ENCODE measurements at regions of chrX and their contacts with region 1.

Region 1: DNA sequence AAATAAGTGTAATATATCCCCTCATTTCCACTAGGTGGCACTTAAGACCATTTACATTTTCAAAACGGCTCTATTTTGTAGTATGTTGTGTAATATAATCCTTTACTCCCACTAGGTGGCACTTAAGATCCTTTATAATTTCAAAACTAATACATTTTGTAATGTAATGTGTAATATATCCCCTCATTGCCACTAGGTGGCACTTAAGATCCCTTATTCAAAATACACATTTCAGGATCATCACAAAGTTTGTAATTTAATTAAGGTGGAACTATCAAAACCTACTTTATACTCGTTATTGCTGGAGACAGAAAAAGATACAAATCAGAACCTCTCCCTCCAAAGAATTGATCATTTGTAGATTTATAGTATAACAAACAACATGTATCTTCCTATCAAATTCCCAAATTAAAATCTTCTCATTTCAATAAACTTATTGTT is 132.5 kb downstream of the ARHGAP6 start:
- DNase-seq: peak; percentile 56 to 76 (median 62)
- ATAC-seq: peak; percentile 81
- H3K4me3 ChIP-seq: no peak overlapping the region
- H3K27ac ChIP-seq: no peak overlapping the region
- H3K4me1 ChIP-seq: peaks cover 0 to 18% of the 10 kb centered on the region in 2 experiments; a peak in 2 of 5 replicates
- H3K27me3 ChIP-seq: no peaks in the 10 kb centered on the region
- CTCF ChIP-seq: peak; percentile 58 to 100 (median 98)
- EP300 ChIP-seq: no peak
- POLR2A ChIP-seq: no peak
- RAD21 ChIP-seq: peak; percentile 98

Region 2: GRCh38 chrX:11125060-11125459 is 408.2 kb before region 1 on chrX:
- CTCF ChIA-PET with region 1: no interaction called
- POLR2A ChIA-PET with region 1: no interaction called
- in situ Hi-C with region 1: no loop called
- intact Hi-C with region 1: no loop called
- DNase-seq: no peak
- ATAC-seq: no peak
- H3K4me3 ChIP-seq: no peak overlapping the region
- H3K27ac ChIP-seq: no peak overlapping the region
- H3K4me1 ChIP-seq: no peaks in the 10 kb centered on the region
- H3K27me3 ChIP-seq: no peaks in the 10 kb centered on the region
- CTCF ChIP-seq: no peak
- EP300 ChIP-seq: no peak
- POLR2A ChIP-seq: no peak
- RAD21 ChIP-seq: no peak

Region 3: GRCh38 chrX:11143931-11144678 is 389.1 kb before region 1 on chrX:
- CTCF ChIA-PET with region 1: interaction called, 91 read pairs
- POLR2A ChIA-PET with region 1: interaction called, 3 read pairs
- in situ Hi-C with region 1: loop called (anchors 5 kb)
- intact Hi-C with region 1: loop called (anchors 1 kb)
- DNase-seq: peak; percentile 39 to 81 (median 53)
- ATAC-seq: peak; percentile 93
- H3K4me3 ChIP-seq: no peak overlapping the region
- H3K27ac ChIP-seq: no peak overlapping the region
- H3K4me1 ChIP-seq: no peaks in the 10 kb centered on the region; a peak in 2 of 5 replicates
- H3K27me3 ChIP-seq: no peaks in the 10 kb centered on the region
- CTCF ChIP-seq: peak; percentile 48 to 74 (median 65); a peak in 5 of 6 replicates
- EP300 ChIP-seq: no peak
- POLR2A ChIP-seq: no peak
- RAD21 ChIP-seq: peak; percentile 71 to 78

Region 4: DNA sequence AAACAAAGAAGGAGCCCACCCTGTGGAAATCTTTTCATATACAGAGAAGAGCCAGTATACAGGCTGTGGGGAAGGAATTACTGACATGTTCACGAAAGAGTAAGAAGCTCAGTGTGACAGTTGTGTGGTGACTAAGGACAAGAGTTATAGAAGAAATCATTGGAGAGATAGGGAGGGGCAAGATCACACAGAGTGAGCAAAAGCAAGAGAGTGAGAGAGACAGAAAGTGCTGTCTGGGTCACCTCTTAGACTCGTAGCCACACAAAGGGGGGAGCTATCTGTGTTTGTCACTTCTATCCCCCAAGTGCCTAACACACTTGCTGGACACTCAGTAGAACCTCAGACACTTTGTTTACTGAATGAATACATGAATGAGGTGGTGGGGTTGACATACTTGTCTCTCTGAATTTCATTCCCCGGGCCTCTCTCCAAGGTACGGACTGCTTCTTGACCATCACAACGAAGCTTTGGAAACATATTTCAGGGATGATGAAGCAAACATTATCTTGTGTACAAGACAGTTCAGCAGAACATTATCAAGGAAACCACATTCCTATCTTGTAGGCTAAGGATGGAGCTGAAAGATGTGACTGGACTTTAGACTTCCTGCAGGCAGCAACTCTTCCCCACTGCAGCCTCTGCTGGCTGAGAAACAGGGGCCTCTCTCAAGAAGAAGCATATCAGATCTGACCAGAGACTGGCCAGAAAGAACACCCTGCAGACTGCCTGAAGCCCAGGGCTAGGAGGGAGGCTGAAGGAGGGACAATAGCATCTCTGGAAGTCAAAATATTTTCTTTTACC is 71.8 kb before region 1 on chrX:
- CTCF ChIA-PET with region 1: interaction called, 3 read pairs
- POLR2A ChIA-PET with region 1: no interaction called
- in situ Hi-C with region 1: no loop called
- intact Hi-C with region 1: loop called (anchors 1 kb)
- DNase-seq: peak; percentile 27 to 92 (median 60)
- ATAC-seq: peak; percentile 91
- H3K4me3 ChIP-seq: peak overlapping the region; percentile 17; the same call in 1 of the 2 replicates
- H3K27ac ChIP-seq: peak overlapping the region; percentile 94
- H3K4me1 ChIP-seq: peaks cover 10 to 53% of the 10 kb centered on the region in 2 experiments; a peak in 4 of 5 replicates
- H3K27me3 ChIP-seq: no peaks in the 10 kb centered on the region
- CTCF ChIP-seq: peak in 1 of 3 experiments; percentile 27; a peak in 2 of 6 replicates
- EP300 ChIP-seq: peak; percentile 96
- POLR2A ChIP-seq: no peak; the same call in 1 of the 2 replicates
- RAD21 ChIP-seq: peak; percentile 12 to 25; a peak in 1 of 4 replicates

Region 5: GRCh38 chrX:11665144-11666111 is 132.2 kb after region 1 on chrX and contains the start of gene ARHGAP6:
- CTCF ChIA-PET with region 1: no interaction called
- POLR2A ChIA-PET with region 1: no interaction called
- in situ Hi-C with region 1: no loop called
- intact Hi-C with region 1: no loop called
- DNase-seq: no peak
- ATAC-seq: no peak
- H3K4me3 ChIP-seq: no peak within 1 kb of the TSS
- H3K27ac ChIP-seq: no peak within 1 kb of the TSS
- H3K4me1 ChIP-seq: peaks cover 0 to 13% of the 10 kb centered on the region in 2 experiments; a peak in 2 of 5 replicates
- H3K27me3 ChIP-seq: peaks cover 3 to 23% of the 10 kb centered on the region in 2 experiments
- CTCF ChIP-seq: no peak
- EP300 ChIP-seq: no peak
- POLR2A ChIP-seq: no peak
- RAD21 ChIP-seq: no peak
- polyA plus RNA-seq, gene ARHGAP6: 12.5 to 13.8 TPM

Region 6: DNA sequence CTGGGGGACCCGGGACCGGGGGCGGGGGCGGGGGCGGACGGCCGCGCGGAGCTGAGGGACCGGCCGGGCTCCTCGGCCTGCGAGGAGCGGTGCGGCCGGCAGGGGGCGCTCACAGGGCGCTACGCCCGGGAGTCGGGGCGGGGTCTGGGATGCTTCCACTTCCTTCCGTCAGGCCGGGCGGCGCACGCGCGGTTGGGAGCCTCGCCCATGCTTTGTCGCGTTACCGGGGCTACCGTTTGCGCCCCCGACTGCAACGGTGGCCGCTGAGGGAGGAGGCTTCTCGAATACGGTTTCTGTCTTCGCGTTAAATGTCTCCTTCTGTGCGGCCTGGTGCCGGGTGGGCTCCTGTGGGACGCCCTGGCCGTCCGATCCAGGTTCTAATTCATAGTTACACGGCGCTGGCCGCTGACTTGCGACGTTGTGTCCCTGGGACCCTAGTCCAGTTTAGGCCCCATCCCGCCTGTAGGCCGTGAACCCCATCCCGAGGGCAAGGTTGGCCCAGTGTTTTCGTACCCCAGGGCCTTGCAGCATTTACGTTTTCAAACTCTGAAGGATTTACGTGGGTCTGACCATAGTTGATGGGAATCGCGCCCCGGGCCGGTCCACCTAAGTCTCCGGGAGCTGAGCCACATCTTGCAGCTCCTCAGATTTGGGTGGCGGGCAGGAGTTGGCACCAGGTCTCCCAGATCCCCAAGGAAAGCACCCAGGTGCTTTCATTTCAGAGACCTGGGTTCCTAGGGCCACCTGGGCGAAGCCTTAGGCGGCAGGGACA is 225.4 kb after region 1 on chrX:
- CTCF ChIA-PET with region 1: interaction called, 14 read pairs
- POLR2A ChIA-PET with region 1: no interaction called
- in situ Hi-C with region 1: no loop called
- intact Hi-C with region 1: loop called (anchors 5 kb)
- DNase-seq: peak; percentile 82 to 92 (median 86)
- ATAC-seq: peak; percentile 83
- H3K4me3 ChIP-seq: peak overlapping the region; percentile 79
- H3K27ac ChIP-seq: peak overlapping the region; percentile 74
- H3K4me1 ChIP-seq: peaks cover 6% of the 10 kb centered on the region in 2 experiments; a peak in 4 of 5 replicates
- H3K27me3 ChIP-seq: no peaks in the 10 kb centered on the region
- CTCF ChIP-seq: peak; percentile 41 to 65 (median 59); a peak in 4 of 6 replicates
- EP300 ChIP-seq: no peak
- POLR2A ChIP-seq: peak; percentile 54
- RAD21 ChIP-seq: 0 out of 4 replicates have a peak, but pooled peaks of 1 of the 2 experiments have one; percentile 8

Region 7: GRCh38 chrX:12701628-12702027 is 1168.4 kb after region 1 on chrX:
- CTCF ChIA-PET with region 1: interaction called, 3 read pairs
- POLR2A ChIA-PET with region 1: no interaction called
- in situ Hi-C with region 1: no loop called
- intact Hi-C with region 1: loop called (anchors 5 kb)
- DNase-seq: peak; percentile 58 to 78 (median 63)
- ATAC-seq: peak; percentile 100
- H3K4me3 ChIP-seq: no peak overlapping the region
- H3K27ac ChIP-seq: no peak overlapping the region
- H3K4me1 ChIP-seq: no peaks in the 10 kb centered on the region
- H3K27me3 ChIP-seq: no peaks in the 10 kb centered on the region; a peak in 1 of 5 replicates
- CTCF ChIP-seq: peak; percentile 71 to 76 (median 76)
- EP300 ChIP-seq: no peak
- POLR2A ChIP-seq: no peak
- RAD21 ChIP-seq: peak; percentile 61 to 78